Activated CD4-positive, alpha-beta T cell treated with anti-CD3 and anti-CD28 coated beads for 36 hours (primary cell): ENCODE measurements at regions of chr10 and their contacts with region 1.

Region 1: GRCh38 chr10:11757821-11758463 is 15.8 kb downstream of the ECHDC3 start:
- DNase-seq: peak; percentile 93
- ATAC-seq: peak; percentile 100
- H3K4me3 Mint-ChIP-seq: no peak overlapping the region
- H3K27ac Mint-ChIP-seq: peak overlapping the region; percentile 35
- H3K4me1 Mint-ChIP-seq: peaks cover 6% of the 10 kb centered on the region
- H3K27me3 Mint-ChIP-seq: no peaks in the 10 kb centered on the region

Region 2: GRCh38 chr10:11505639-11506038 is 252.3 kb before region 1 on chr10:
- CTCF ChIA-PET with region 1: interaction called, 14 read pairs
- POLR2A ChIA-PET with region 1: no interaction called
- intact Hi-C with region 1: no loop called
- DNase-seq: peak; percentile 72
- ATAC-seq: peak; percentile 99
- H3K4me3 Mint-ChIP-seq: no peak overlapping the region
- H3K27ac Mint-ChIP-seq: peak overlapping the region; percentile 44
- H3K4me1 Mint-ChIP-seq: peaks cover 16% of the 10 kb centered on the region
- H3K27me3 Mint-ChIP-seq: no peaks in the 10 kb centered on the region

Region 3: DNA sequence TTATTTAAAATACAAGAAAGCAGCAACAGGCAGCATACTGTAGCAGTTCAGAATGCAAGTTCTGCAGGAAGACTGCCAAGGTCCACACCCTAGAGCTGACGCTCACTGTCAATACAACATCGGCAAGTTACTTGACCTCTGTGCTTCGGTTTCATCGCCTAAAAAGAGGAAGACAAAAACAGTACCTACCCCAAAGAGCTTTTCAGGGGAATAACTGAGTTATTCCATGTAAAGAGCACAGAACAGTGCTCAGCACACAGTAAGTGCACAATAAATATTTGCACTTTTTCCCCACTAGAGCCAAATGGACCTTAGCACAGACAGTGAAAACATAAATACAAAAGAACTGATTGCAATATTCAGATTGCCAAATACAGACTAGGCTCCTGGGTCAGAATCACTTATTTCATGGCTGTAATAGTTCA is 235.1 kb before region 1 on chr10:
- CTCF ChIA-PET with region 1: interaction called, 25 read pairs
- POLR2A ChIA-PET with region 1: no interaction called
- intact Hi-C with region 1: no loop called
- DNase-seq: no peak
- ATAC-seq: no peak
- H3K4me3 Mint-ChIP-seq: no peak overlapping the region
- H3K27ac Mint-ChIP-seq: no peak overlapping the region
- H3K4me1 Mint-ChIP-seq: peaks cover 9% of the 10 kb centered on the region
- H3K27me3 Mint-ChIP-seq: no peaks in the 10 kb centered on the region

Region 4: DNA sequence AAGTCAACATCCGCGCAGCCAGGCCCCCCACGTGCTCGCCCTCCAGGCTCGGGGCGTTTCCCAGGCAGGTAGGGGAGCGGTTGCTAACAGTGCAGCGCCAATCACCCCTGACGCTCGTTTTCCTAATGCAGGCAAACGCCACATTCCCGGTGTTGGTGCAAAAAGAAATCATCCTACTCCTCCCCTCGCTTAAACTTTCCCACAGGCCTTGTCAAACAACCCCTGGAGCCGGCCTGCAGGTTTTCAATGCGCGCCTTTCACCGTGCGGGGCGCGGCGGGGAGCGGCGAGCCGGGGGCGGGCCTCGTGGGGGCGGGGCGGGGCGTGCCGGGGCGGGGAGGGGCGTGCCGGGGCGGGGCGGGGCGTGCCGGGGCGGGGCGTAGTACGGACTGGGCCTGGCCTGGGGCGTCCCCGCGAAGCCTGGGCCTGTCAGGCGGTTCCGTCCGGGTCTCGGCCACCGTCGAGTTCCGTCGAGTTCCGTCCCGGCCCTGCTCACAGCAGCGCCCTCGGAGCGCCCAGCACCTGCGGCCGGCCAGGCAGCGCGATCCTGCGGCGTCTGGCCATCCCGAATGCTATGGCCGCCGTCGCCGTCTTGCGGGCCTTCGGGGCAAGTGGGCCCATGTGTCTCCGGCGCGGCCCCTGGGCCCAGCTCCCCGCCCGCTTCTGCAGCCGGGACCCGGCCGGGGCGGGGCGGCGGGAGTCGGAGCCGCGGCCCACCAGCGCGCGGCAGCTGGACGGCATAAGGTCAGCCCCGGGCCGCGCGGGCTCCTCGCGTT is 15.8 kb before region 1 on chr10 and contains the start of gene ECHDC3:
- CTCF ChIA-PET with region 1: interaction called, 11 read pairs
- POLR2A ChIA-PET with region 1: no interaction called
- intact Hi-C with region 1: no loop called
- DNase-seq: peak; percentile 72
- ATAC-seq: peak; percentile 87
- H3K4me3 Mint-ChIP-seq: peak within 1 kb of the TSS; percentile 61
- H3K27ac Mint-ChIP-seq: no peak within 1 kb of the TSS
- H3K4me1 Mint-ChIP-seq: peaks cover 6% of the 10 kb centered on the region
- H3K27me3 Mint-ChIP-seq: peaks cover 14% of the 10 kb centered on the region
- total RNA-seq, gene ECHDC3: 3.5 to 3.8 TPM